T-cell (primary cell): ENCODE measurements at regions of chr2 and their contacts with region 1.

Region 1: DNA sequence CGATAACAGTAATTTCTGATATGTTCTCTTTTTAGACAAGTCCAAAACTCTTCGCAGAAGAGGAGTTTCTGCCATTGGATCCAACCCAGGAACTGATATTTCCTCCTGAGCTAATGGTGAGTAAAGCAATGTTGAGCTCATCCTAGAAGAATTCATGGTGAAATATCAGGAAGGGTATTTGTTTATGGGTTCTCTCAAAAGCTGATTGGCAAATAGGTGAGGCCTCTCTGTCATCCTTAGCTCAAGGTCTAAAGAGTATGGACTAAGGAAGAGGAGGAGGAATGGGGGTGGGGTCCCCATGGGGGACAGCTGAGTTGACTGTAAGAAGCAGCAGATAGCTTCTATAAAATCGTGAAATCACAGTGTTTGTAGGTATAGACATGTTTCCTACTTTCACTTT is 18.2 kb downstream of the AOX1 start:
- DNase-seq: no peak
- ATAC-seq: no peak
- H3K4me3 ChIP-seq: no peak overlapping the region
- H3K4me3 Mint-ChIP-seq: no peak overlapping the region
- H3K27ac ChIP-seq: no peak overlapping the region
- H3K27ac Mint-ChIP-seq: no peak overlapping the region
- H3K4me1 ChIP-seq: no peaks in the 10 kb centered on the region
- H3K4me1 Mint-ChIP-seq: no peaks in the 10 kb centered on the region
- H3K27me3 ChIP-seq: peaks cover 0 to 2% of the 10 kb centered on the region in 2 experiments
- H3K27me3 Mint-ChIP-seq: peaks cover 3 to 9% of the 10 kb centered on the region in 2 donors

Region 2: GRCh38 chr2:200659410-200659809 is 55.4 kb after region 1 on chr2:
- CTCF ChIA-PET with region 1: interaction called in 1 of 2 experiments, 10 read pairs
- POLR2A ChIA-PET with region 1: no interaction called
- DNase-seq: no peak
- ATAC-seq: no peak
- H3K4me3 ChIP-seq: no peak overlapping the region
- H3K4me3 Mint-ChIP-seq: no peak overlapping the region
- H3K27ac ChIP-seq: no peak overlapping the region
- H3K27ac Mint-ChIP-seq: no peak overlapping the region
- H3K4me1 ChIP-seq: no peaks in the 10 kb centered on the region
- H3K4me1 Mint-ChIP-seq: no peaks in the 10 kb centered on the region
- H3K27me3 ChIP-seq: no peaks in the 10 kb centered on the region
- H3K27me3 Mint-ChIP-seq: peaks cover 0 to 7% of the 10 kb centered on the region in 2 donors

Region 3: GRCh38 chr2:202061695-202062094 is 1457.7 kb after region 1 on chr2:
- CTCF ChIA-PET with region 1: no interaction called
- POLR2A ChIA-PET with region 1: interaction called in 1 of 2 experiments, 16 read pairs
- DNase-seq: no peak
- ATAC-seq: no peak
- H3K4me3 ChIP-seq: no peak overlapping the region
- H3K4me3 Mint-ChIP-seq: no peak overlapping the region
- H3K27ac ChIP-seq: no peak overlapping the region
- H3K27ac Mint-ChIP-seq: no peak overlapping the region
- H3K4me1 ChIP-seq: no peaks in the 10 kb centered on the region
- H3K4me1 Mint-ChIP-seq: no peaks in the 10 kb centered on the region
- H3K27me3 ChIP-seq: peaks cover 0 to 11% of the 10 kb centered on the region in 2 experiments
- H3K27me3 Mint-ChIP-seq: peaks cover 10 to 32% of the 10 kb centered on the region in 2 donors